Mammary epithelial cell (primary cell): ENCODE measurements at regions of chr7 and their contacts with region 1.

Region 1: DNA sequence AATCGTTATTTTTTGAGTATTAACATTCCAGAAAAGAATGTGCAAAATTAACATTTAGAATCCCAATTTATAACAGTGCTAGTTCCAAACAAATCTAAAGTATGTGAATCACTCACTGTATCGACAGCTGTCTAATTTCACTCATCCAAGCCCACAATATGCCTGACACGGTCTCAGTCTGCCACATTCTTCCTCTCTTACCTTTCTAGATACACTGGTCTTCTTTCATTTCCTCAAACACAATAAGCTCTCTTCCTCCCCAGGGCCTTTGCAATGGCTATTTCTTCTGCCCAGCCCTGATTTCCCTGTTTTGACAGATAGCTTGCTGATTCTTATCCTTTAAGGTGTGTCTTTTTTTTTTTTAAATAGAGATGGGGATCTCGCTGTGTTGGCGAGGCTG is 48.8 kb downstream of the UBE2H start:
- DNase-seq: no peak
- H3K4me3 ChIP-seq: no peak overlapping the region
- H3K27ac ChIP-seq: no peak overlapping the region
- H3K4me1 ChIP-seq: peaks cover 6% of the 10 kb centered on the region
- H3K27me3 ChIP-seq: no peaks in the 10 kb centered on the region
- CTCF ChIP-seq: no peak

Region 2: DNA sequence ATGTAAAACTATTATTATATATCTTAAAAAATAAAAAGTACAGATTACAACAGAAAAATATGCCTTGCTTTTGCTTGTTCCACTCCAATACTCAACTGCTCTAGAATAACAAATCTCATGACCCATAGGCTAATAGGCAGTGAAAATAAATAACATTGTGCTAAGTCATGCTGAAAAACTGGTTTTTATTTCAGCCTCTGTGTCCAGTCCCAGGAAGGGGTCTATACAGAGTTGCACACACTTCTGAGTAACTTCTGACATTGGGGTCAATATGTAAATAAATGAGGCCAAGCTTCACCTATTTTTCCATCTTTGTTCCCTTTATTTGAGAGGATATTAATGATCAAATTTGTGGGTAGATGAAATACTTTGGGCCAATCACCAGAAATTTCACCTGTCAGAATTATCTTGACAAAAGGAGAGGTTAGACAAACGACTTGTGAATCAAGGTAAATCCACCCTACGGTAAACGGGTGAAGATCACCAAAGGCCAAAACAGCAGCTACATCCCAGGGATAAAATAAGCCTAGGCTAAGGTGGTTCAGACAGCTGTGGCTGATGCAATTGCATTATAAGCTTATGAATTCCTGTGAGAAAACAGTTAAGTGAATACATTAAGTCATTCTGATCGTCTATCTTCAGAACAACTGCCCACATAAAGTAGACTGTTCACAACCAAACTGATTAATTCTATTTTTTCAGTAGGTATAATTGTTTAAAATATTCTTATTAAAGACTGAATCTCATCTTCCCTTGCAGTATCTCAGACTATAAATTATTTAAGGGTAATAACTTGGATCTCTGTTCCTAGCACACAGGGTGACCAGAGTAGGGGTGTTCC is 38.6 kb before region 1 on chr7:
- CTCF ChIA-PET with region 1: no interaction called
- dilution Hi-C with region 1: loop called (anchors 5 kb)
- in situ Hi-C with region 1: no loop called
- intact Hi-C with region 1: no loop called
- DNase-seq: no peak
- H3K4me3 ChIP-seq: no peak overlapping the region
- H3K27ac ChIP-seq: peak overlapping the region; percentile 8
- H3K4me1 ChIP-seq: peaks cover 19% of the 10 kb centered on the region
- H3K27me3 ChIP-seq: no peaks in the 10 kb centered on the region
- CTCF ChIP-seq: no peak